CD4-positive, alpha-beta T cell (primary cell): ENCODE measurements at regions of chr16 and their contacts with region 1.

Region 1: DNA sequence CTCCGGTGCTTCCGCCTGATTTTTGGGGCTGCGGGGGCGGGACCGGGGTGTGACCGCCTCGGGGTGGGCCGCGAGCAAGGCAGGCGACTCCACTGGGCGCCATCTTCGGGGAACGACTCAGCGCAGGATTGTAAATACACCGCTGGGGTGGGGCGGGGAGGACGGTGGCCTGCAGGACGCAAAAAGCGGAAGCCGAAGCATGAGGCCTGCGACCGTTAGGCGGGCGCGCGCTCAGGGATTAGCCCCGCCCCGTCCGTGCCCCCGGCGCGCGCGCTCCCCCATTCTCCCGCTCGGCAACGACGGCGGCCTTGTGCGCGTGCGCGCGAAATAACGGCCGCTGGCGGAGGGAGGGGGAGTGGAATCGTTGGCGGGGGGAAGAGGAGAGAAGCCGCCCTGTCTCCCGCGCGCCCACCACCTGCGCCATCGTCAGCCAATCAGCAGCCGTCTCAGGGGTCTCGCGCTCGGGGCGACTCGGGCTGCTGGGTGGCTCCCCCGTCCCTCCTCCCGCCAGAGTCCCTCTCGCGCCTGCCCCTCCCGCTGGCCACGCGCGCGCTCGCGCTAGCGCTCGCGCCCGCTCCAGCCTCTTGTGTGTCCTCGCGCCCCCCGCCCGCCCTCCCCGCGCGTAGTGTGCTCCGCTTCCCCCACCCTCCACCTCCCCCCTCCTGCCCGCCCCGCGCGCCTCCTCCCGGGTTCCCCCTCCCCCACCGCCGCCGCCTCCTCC is 791 bp upstream of the MAZ start:
- DNase-seq: peak; percentile 95 to 99 (median 98)
- ATAC-seq: peak; percentile 63
- H3K4me3 ChIP-seq: peak overlapping the region; percentile 94
- H3K4me3 Mint-ChIP-seq: peak overlapping the region; percentile 100
- H3K27ac ChIP-seq: peak overlapping the region; percentile 92 to 96
- H3K27ac Mint-ChIP-seq: peak overlapping the region; percentile 96
- H3K4me1 ChIP-seq: peaks cover 52% of the 10 kb centered on the region
- H3K4me1 Mint-ChIP-seq: peaks cover 46% of the 10 kb centered on the region
- H3K27me3 ChIP-seq: no peaks in the 10 kb centered on the region
- H3K27me3 Mint-ChIP-seq: no peaks in the 10 kb centered on the region
- CTCF ChIP-seq: no peak

Region 2: DNA sequence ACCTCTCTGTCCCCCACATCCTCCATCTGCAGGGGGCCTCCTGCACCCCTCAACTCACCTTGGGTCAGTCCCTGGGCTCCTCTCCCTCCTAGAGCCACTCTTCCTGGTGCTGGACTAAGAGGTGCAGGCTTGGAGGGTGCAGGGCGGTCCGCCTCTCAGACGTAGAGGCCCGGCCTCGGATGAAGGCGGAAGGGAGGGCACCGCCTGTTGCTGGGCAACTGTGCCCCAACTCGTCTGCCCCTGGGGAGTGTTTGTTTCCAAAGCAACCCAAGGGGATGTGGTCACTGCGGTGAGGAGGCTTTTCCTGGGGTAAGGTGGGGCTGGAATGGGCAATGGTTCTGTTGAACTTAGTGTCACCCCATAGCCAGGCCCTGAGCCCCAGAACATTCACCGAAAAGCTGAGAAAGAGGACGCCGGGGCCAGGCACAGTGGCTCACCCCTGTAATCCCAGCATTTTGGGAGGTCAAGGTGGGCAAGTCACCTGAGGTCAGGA is 59.6 kb before region 1 on chr16 and contains the start of gene C16orf54:
- CTCF ChIA-PET with region 1: interaction called, 4 read pairs
- POLR2A ChIA-PET with region 1: interaction called, 17 read pairs
- intact Hi-C with region 1: no loop called
- DNase-seq: peak; percentile 88 to 99 (median 92)
- ATAC-seq: peak; percentile 82
- H3K4me3 ChIP-seq: peak within 1 kb of the TSS; percentile 74
- H3K4me3 Mint-ChIP-seq: peak within 1 kb of the TSS; percentile 99
- H3K27ac ChIP-seq: peak within 1 kb of the TSS; percentile 93 to 96
- H3K27ac Mint-ChIP-seq: peak within 1 kb of the TSS; percentile 98
- H3K4me1 ChIP-seq: peaks cover 87% of the 10 kb centered on the region
- H3K4me1 Mint-ChIP-seq: peaks cover 70% of the 10 kb centered on the region
- H3K27me3 ChIP-seq: no peaks in the 10 kb centered on the region
- H3K27me3 Mint-ChIP-seq: no peaks in the 10 kb centered on the region
- CTCF ChIP-seq: no peak
- total RNA-seq, gene C16orf54: 250 to 261 TPM

Region 3: DNA sequence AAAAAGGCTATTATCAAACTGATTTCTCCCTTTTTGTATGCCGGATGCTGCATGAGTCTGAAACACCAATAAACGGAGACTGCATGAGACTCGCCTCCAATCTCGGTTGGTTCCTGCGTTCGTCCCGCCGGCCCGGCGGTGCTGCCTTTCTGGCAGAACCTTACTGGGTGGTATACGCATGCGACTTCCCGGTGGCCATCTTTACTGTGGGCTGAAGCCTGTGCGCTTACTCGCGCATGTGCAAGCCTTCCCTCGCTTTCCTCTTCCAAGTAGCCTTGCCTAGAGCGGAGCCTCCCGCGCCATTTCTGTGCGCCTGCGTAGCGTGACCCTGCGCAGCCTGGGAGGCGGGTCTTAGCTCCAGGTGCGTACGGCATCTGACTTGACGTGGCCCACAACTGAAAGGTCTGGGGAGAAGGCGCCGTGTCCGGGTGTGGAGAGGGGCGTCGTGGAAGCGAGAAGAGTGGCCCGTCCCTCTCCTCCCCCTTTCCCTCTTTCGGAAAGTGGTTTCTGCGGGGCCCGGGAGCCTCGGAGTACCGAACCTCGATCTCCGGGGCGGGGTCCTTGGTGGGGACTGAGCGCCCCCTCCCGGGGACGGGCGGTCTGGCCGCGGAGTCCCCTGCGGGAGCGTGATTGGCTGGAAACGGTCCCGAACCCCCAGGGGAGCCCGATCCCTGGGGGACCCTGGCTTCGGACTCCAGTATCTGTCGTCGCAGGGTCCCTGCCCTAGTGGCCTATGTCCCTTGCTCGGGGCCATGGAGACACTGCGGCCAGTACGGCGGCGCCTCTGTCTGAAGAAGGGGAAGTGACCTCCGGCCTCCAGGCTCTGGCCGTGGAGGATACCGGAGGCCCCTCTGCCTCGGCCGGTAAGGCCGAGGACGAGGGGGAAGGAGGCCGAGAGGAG is 10.5 kb after region 1 on chr16 and contains the start of gene PAGR1:
- CTCF ChIA-PET with region 1: interaction called, 75 read pairs
- POLR2A ChIA-PET with region 1: interaction called, 190 read pairs
- intact Hi-C with region 1: loop called (anchors 1 kb)
- DNase-seq: peak; percentile 97 to 100 (median 98)
- ATAC-seq: peak; percentile 73
- H3K4me3 ChIP-seq: peak within 1 kb of the TSS; percentile 95
- H3K4me3 Mint-ChIP-seq: peak within 1 kb of the TSS; percentile 97
- H3K27ac ChIP-seq: peak within 1 kb of the TSS; percentile 84 to 94
- H3K27ac Mint-ChIP-seq: peak within 1 kb of the TSS; percentile 90
- H3K4me1 ChIP-seq: peaks cover 92% of the 10 kb centered on the region
- H3K4me1 Mint-ChIP-seq: peaks cover 83% of the 10 kb centered on the region
- H3K27me3 ChIP-seq: no peaks in the 10 kb centered on the region
- H3K27me3 Mint-ChIP-seq: no peaks in the 10 kb centered on the region
- CTCF ChIP-seq: peak; percentile 97
- total RNA-seq, gene PAGR1: 20.3 TPM

Region 4: DNA sequence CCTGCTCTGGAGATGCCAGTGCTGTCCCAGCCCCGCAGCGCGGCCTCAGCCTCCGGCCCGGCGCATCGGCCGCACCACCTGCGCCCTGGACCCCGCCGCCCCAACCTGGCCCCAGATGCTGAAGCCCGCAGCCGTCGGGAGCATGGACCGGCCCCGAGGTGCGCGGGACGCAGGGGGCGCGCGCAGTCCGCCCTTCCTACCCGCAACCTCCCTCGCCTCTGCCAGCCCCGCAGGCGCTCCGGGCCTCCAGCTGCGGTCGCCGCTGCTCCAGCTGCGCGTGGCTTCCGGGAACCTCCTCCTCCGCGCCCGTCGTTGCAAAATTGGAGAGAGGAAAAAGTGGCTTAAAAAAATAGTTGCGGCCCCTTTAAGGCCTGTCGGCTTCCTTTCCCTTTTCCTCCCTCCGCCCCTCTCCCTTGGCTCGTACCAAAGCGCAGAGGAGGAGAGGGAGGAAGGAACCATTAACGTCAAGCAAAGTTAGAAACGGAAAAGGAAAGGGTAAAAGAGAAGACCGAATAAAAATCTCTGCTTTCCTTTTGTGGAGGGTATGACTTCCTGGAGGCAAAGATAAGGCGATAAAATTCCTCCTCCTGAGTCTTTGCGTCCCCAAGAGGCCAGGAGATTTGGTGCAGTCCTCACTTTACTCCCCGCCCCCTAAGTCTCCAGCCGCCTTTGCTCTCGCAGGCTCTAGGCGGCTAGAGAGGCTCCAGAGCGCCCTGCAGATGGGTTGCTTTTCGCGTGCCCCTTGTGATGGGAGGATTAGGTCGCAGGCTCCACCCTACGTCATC is 57.5 kb after region 1 on chr16 and contains the start of gene CDIPT:
- CTCF ChIA-PET with region 1: interaction called, 5 read pairs
- POLR2A ChIA-PET with region 1: interaction called, 16 read pairs
- intact Hi-C with region 1: loop called (anchors 1 kb)
- DNase-seq: peak; percentile 85 to 98 (median 90)
- ATAC-seq: peak; percentile 96
- H3K4me3 ChIP-seq: peak within 1 kb of the TSS; percentile 76
- H3K4me3 Mint-ChIP-seq: peak within 1 kb of the TSS; percentile 95
- H3K27ac ChIP-seq: peak within 1 kb of the TSS; percentile 87 to 97
- H3K27ac Mint-ChIP-seq: peak within 1 kb of the TSS; percentile 95
- H3K4me1 ChIP-seq: peaks cover 30% of the 10 kb centered on the region
- H3K4me1 Mint-ChIP-seq: peaks cover 22% of the 10 kb centered on the region
- H3K27me3 ChIP-seq: no peaks in the 10 kb centered on the region
- H3K27me3 Mint-ChIP-seq: no peaks in the 10 kb centered on the region
- CTCF ChIP-seq: peak; percentile 70
- total RNA-seq, gene CDIPT: 25.7 to 27.0 TPM

Region 5: DNA sequence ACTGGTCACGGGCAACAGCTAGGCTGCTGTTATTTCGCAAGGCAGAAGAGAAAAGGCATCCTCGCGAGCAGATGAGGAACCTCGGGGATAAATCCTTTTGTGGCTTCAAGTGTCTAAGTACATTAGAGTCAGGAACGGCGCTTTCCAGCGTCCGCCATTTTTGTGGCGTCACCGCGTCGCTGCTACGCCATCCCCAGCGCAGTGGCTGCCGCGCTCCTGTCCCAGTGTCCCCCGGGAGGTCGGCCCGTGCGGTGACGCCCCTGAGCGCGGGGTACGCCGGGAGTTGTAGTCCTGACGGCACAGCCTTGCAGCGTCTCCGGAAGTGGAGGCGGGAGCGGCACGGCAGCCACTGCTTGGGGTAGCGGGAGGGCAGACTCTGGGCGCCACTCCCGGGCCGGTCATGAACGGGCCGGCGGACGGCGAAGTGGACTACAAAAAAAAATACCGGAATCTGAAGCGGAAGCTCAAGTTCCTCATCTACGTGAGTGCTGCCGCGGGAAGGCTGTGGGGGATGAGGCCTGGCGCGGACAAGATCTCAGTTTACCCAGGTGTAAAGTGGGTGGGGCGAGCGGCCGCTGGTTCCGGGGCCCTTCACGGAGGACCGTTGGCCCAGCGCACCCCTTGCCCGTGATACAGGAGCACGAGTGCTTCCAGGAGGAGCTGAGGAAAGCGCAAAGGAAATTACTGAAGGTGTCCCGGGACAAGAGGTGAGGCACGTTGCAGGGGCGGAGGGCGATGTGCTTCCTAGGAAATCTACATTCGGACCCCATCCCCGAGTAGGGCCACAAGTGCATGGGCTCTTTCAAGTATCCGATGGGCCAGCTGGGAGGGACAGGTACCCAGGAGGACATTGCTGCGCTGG is 190.6 kb after region 1 on chr16 and contains the start of gene INO80E:
- CTCF ChIA-PET with region 1: no interaction called
- POLR2A ChIA-PET with region 1: interaction called, 4 read pairs
- intact Hi-C with region 1: loop called in 1 of 2 experiments (anchors 5 kb)
- DNase-seq: peak; percentile 97 to 100 (median 99)
- ATAC-seq: peak; percentile 95
- H3K4me3 ChIP-seq: peak within 1 kb of the TSS; percentile 83
- H3K4me3 Mint-ChIP-seq: peak within 1 kb of the TSS; percentile 98
- H3K27ac ChIP-seq: peak within 1 kb of the TSS; percentile 98
- H3K27ac Mint-ChIP-seq: peak within 1 kb of the TSS; percentile 99
- H3K4me1 ChIP-seq: peaks cover 30% of the 10 kb centered on the region
- H3K4me1 Mint-ChIP-seq: peaks cover 33% of the 10 kb centered on the region
- H3K27me3 ChIP-seq: no peaks in the 10 kb centered on the region
- H3K27me3 Mint-ChIP-seq: no peaks in the 10 kb centered on the region
- CTCF ChIP-seq: no peak
- total RNA-seq, gene INO80E: 54.6 to 57.6 TPM